PC-9 (cell line): ENCODE measurements at regions of chr12 and their contacts with region 1.

Region 1: GRCh38 chr12:3073438-3074250 is 3.5 kb upstream of the TSPAN9 start:
- DNase-seq: peak; percentile 67 to 88
- H3K4me3 ChIP-seq: no peak overlapping the region
- H3K27ac ChIP-seq: no peak overlapping the region
- H3K4me1 ChIP-seq: peaks cover 6% of the 10 kb centered on the region
- H3K27me3 ChIP-seq: no peaks in the 10 kb centered on the region
- CTCF ChIP-seq: peak; percentile 99

Region 2: GRCh38 chr12:3107071-3107583 is 33.5 kb after region 1 on chr12:
- CTCF ChIA-PET with region 1: interaction called, 16 read pairs
- POLR2A ChIA-PET with region 1: no interaction called
- intact Hi-C with region 1: no loop called
- DNase-seq: no peak
- H3K4me3 ChIP-seq: no peak overlapping the region
- H3K27ac ChIP-seq: no peak overlapping the region
- H3K4me1 ChIP-seq: no peaks in the 10 kb centered on the region
- H3K27me3 ChIP-seq: no peaks in the 10 kb centered on the region
- CTCF ChIP-seq: no peak

Region 3: DNA sequence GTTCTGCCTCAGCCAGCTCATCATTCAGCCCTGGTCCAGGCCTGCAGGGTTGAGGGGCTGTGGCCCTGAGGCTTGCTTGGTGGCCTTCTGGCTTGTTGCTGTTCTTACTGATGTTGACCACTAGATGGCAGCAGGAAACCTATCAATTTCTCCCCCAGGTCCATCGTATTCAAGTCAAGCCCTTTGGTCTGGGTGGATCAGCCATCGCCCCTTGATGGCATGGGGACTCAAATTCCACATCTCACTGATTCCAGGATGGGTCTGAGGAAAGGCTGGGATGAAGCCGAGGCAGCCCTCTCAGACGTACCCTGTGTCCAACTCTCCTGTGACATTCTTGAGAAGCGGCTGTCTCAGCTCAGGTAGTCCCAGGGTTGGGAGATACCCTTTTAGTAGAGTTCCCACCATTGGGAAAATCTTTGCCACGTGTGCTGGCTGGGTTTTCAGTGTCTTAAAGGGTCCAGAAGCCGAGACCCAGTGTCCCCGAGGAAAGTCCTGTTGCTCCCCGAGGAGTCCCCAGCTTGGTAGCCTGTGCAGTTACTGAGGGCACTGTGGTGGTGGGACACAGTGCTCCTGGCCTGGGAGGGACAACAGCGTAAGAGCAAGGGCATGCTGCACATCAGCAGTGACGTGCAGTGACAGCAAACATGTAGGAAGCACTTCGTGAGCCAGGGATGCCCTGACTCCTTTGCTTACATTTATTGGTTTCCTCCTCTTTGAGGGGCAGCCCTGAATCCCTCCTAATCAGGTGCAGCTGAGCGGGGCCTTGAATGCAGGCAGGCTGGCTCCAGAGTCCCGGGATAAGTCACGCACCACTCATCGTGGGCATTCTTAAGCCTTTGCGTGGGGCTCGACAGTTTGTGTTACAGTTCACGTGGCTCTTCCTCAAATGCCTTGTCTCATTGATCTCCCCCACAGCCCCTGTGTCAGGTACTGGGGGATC is 62.1 kb after region 1 on chr12:
- CTCF ChIA-PET with region 1: interaction called, 3 read pairs
- POLR2A ChIA-PET with region 1: no interaction called
- intact Hi-C with region 1: loop called (anchors 1 kb)
- DNase-seq: peak; percentile 62
- H3K4me3 ChIP-seq: no peak overlapping the region
- H3K27ac ChIP-seq: no peak overlapping the region
- H3K4me1 ChIP-seq: no peaks in the 10 kb centered on the region
- H3K27me3 ChIP-seq: no peaks in the 10 kb centered on the region
- CTCF ChIP-seq: peak; percentile 93

Region 4: GRCh38 chr12:3168223-3169221 is 94.9 kb after region 1 on chr12:
- CTCF ChIA-PET with region 1: interaction called, 12 read pairs
- POLR2A ChIA-PET with region 1: no interaction called
- intact Hi-C with region 1: no loop called
- DNase-seq: peak; percentile 87
- H3K4me3 ChIP-seq: no peak overlapping the region
- H3K27ac ChIP-seq: no peak overlapping the region
- H3K4me1 ChIP-seq: peaks cover 26% of the 10 kb centered on the region
- H3K27me3 ChIP-seq: no peaks in the 10 kb centered on the region
- CTCF ChIP-seq: no peak

Region 5: DNA sequence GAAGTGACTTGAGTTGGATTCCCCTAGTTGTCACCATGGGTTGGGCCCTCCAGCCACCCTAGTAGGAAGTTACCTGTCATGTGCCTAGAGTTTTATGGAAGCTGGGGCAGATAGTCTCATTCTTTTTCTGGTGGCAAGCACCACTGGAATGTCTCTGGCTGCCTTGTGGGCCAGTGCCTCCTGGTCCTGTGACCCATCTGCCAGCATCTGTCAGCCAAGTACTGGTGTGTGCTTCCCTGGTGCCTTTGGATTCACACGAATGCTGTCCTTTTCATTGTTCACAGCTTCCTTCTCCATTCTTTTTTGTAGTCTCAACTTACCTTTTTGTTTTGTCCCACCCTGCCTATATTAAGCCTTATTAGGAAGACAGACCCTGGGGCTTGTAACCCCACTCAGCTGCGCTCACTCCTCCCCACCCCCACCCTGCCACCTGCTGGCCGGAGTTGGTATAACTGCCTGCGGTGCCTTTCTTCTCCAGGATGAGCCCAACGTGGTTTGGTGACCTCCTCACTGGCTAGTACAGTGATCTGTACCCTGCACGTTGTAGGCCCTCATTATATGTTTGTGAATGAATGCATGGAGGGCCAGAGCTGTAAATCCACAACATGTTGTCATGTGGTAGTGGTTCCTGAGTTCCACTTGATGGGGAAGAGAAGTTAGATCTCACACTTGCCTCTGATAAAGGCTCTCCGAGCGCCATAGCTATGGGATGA is 129.2 kb after region 1 on chr12:
- CTCF ChIA-PET with region 1: no interaction called
- POLR2A ChIA-PET with region 1: no interaction called
- intact Hi-C with region 1: loop called (anchors 2 kb)
- DNase-seq: peak in 1 of 2 experiments; percentile 58
- H3K4me3 ChIP-seq: no peak overlapping the region
- H3K27ac ChIP-seq: no peak overlapping the region
- H3K4me1 ChIP-seq: no peaks in the 10 kb centered on the region
- H3K27me3 ChIP-seq: peaks cover 23% of the 10 kb centered on the region; the same call in 1 of the 2 replicates
- CTCF ChIP-seq: peak; percentile 99

Region 6: DNA sequence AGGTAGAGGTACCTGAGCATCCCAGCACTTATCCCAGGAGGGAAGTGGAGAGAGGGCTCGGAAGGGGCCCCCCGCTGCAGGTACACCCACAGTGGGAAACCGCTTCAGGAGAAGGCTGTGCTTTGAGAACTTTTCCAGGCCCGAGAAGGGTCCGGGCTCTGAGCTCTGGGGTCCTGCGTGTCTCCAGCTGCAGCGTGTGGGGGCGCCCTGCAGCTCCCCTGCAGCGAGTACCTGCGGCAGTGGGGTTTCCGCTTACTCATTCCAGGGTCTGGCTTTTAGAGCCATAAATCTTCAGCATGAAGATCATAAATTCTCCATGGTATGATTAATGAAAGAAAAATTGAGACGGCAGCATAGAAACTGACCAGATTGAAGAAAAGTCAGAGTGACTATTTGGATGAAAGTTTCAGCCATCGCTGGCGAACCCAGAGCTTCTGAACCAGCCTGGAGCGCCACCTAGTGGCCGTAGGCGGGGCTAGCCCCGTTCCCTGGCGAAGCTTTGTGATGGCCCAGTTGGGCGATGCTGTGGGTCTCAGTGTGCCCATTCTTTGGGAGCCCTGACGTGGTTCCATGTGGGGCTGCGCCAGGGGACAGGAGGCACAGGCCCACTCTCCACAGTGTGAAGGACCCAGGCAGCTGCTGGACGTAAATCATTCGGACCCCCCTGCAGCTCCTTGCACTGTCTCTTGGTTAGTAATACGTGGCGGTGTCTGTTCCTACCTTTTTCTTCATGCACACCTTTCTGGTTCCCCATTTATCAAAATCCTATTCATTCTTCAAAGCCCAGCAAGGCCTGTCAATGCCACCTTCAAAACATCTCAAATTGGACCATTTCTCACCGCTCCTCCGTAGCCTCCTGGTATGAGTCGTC is 201.8 kb after region 1 on chr12:
- CTCF ChIA-PET with region 1: interaction called, 9 read pairs
- POLR2A ChIA-PET with region 1: no interaction called
- intact Hi-C with region 1: loop called (anchors 1 kb)
- DNase-seq: peak; percentile 49 to 81
- H3K4me3 ChIP-seq: no peak overlapping the region
- H3K27ac ChIP-seq: no peak overlapping the region
- H3K4me1 ChIP-seq: peaks cover 14% of the 10 kb centered on the region
- H3K27me3 ChIP-seq: 0 out of 2 replicates have a peak, but pooled peaks cover 12% of the 10 kb centered on the region
- CTCF ChIP-seq: peak; percentile 98